Sciatic nerve (tissue), 2 donors: ENCODE measurements at regions of chr21 and their contacts with region 1.

Region 1: GRCh38 chr21:39915881-39916280 is 48.6 kb downstream of the PCP4 start:
- DNase-seq: no peak
- ATAC-seq: no peak

Region 2: DNA sequence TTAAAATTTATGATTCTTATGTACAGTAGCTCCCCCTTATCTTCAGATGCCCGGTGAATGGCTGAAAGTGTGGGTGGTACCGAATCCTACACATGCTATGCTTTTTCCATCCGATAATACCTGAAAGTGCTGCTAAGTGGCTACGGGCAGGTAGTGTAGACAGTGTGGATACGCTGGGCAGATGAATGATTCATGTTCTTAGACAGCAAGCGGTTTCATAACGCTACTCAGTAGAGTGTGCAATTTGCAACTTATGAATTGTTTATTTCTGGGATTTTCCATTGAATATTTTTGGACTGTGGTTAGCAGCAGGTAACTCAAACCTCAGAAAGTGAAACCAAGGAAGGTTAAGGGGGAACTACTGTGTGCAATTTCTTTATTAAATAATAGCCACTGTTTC is 41.1 kb before region 1 on chr21:
- intact Hi-C with region 1: loop called (anchors 1 kb)
- DNase-seq: no peak
- ATAC-seq: no peak

Region 3: DNA sequence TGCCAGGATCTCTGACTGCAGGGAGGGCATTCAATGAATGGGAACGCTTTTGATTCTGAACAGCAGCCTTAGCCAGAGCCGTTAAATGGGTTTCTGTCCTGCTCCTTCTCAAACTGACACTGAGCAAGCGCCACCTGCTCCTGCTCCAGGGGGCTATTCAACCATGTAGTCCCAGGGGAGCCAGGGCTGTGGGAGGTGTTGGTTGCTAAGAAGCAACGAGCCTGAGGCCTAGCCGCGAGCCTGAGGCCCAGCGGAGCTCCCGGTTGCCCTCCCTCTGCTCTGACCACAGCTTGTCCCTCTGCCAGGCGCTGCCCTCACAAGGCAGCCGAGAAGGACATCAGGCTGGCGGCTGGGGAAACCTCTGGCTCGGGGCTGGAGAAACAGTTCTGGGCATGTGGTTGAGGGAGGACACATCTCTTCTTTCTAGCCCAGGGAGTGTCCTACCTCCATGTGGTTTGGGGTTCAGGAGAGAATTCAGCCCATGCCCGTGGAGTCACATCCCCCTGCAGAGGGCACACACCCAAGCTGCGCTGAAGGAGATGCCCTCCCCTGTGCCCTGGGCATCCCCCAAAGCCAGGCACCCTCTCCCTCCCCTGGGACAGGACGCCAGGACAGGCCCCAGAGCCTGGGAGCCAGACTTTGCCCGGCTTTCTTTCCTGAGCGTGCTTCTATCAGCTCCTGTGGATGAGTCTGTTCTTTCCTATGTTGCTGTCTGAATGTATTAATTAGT is 30.6 kb before region 1 on chr21:
- intact Hi-C with region 1: no loop called
- DNase-seq: no peak
- ATAC-seq: peak; percentile 51

Region 4: GRCh38 chr21:41217671-41218660 is 1302.1 kb after region 1 on chr21:
- intact Hi-C with region 1: no loop called
- DNase-seq: peak; percentile 61
- ATAC-seq: peak; percentile 79